Mucosa of descending colon (tissue), 3 donors: ENCODE measurements at regions of chr7 and their contacts with region 1.

Region 1: DNA sequence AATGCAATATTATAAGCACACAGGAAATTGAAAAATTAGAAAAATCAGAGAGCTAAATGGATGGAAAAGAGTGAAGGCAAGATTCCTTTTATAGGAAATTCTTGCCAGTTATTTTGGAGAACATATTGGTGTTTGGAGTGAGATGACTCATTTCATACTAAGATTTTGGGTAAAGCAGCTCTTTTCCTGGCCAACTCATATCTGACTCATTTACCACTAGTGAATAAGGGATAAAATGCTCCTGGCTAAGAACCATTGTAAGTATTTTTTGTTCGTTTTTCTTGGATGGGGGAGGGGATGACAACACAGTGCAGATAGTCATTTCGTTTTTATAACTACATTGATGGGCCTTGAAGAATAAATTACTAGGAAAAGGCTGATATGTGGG is 139.3 kb downstream of the TWIST1 start:
- DNase-seq: no peak
- ATAC-seq: peak; percentile 9
- H3K4me3 ChIP-seq: no peak overlapping the region
- H3K4me1 ChIP-seq: no peaks in the 10 kb centered on the region
- CTCF ChIP-seq: no peak

Region 2: DNA sequence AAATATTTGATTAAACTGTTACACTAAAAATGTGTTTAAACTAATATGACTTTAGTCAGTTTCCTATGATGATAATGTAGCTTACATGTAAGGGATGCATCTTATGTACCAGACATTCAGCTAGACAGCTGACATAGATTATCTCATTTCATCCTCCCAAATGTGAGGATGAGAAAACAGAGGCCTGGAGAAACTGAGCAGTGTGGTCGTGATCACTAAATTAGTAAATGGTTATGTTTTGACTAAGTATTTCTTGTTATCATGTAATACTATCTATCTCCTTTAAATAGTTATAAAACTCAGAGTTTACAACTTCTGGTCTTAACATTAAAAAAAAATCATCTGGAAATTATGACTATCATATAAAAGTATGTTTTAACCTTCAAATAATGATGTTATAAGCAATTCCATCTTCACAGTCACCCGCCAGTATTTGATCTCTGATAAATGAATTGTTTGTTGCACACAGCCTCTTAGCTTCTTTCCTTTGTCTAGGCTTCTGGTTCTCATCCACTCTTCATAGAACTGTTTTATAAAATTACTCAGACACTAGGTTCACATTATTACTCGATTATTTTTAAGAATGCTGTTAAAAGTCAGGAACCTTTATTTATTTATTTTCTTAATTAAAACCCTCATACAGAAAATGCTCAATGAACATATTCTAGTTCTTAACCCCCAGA is 516.2 kb before region 1 on chr7:
- intact Hi-C with region 1: no loop called
- DNase-seq: no peak
- ATAC-seq: no peak
- H3K4me3 ChIP-seq: no peak overlapping the region
- H3K4me1 ChIP-seq: no peaks in the 10 kb centered on the region
- CTCF ChIP-seq: no peak

Region 3: GRCh38 chr7:18895456-18895855 is 82.6 kb before region 1 on chr7:
- intact Hi-C with region 1: loop called in 1 of 2 experiments (anchors 10 kb)
- DNase-seq: no peak
- ATAC-seq: no peak
- H3K4me3 ChIP-seq: no peak overlapping the region
- H3K4me1 ChIP-seq: no peaks in the 10 kb centered on the region
- CTCF ChIP-seq: no peak